Lower leg skin (tissue), 4 donors: ENCODE measurements at regions of chr14 and their contacts with region 1.

Region 1: DNA sequence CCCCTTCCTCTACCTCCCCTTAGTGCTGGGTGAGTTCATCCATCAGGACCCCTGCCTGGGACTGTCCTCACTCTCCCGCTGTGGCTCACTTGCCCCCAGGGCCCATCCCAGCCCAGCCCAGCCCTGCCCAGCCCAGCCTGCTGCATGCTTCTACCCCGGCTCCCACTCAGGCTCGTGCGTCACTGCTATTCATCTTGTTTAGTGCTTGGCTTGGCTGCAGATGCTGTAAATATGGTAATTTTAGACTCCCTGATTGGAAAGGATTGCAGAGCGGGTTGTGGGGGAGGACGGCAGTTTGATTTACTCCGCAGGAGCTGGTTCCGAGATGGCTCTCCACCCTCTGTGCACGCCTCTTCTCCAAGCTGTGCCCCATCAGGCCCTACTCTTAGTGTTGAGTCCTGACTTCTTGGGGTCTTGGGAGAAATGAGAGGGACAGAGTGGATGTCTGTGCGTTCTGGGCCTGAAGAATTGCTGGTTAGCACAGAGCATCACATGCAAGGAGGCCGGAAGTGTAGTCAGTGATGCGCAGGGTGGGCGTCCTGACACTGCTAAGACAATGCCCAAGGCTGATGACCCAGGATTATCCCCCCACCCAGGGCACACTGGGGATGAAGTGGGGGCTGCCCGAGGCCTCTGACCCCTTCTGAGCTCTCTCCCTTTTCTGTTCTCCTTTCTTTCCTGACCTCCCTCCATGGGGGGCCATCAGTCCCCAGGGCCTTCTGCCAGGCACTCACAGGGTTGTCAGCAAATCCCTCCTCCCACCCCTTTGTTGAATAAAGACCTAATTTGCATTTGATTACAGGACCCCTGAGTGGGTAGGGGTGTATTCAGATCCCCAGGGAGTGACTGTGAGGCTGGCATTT is 244.4 kb downstream of the ZFP36L1 start:
- DNase-seq: peak; percentile 94 to 98
- H3K4me3 ChIP-seq: no peak overlapping the region
- CTCF ChIP-seq: no peak
- POLR2A ChIP-seq: no peak

Region 2: DNA sequence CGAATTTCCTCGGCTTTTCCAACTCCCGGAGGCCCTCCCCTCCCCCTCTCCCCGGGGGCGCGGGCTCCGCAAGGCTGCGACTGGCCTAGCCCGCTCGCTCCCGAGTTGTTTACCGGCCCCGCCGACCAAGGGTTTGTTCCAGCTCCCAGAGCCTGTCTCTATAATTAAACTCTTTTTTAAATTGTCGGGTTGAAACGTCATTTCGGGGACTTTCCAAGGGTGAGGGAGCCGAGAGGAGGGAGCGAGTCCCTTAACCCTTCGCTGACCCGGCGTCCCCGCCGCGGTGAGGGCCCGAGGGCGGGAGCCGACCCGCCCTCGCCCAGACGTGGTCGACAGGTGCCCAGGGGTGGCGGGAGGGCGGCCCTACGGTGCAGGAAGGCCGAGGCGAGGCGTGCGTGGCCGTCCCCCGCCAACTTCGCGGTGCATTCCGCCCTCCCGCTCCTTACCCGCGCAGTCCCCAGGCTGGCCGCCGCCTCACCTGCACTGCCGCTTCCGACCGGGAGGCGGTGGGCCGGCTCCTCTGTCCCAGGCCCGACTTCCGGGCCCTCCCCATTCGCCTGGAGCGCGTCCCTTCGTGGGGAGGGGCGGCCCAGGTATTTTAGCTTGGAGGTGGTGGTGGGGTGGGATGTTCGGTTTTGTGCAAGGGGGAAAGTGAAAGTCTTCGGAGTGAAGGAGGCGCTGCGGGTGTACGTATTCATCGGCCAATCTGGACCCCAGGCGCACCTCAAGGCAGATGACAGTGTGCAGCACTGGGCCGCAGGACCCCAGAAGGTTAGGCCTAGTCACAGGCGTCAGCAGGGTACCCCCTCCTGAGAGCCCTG is 247.4 kb after region 1 on chr14:
- intact Hi-C with region 1: loop called (anchors 10 kb)
- DNase-seq: peak; percentile 72 to 96
- H3K4me3 ChIP-seq: peak overlapping the region; percentile 74
- CTCF ChIP-seq: peak in 1 of 3 donors; percentile 89
- POLR2A ChIP-seq: peak in 1 of 2 donors; percentile 19